Ovary (tissue), 10 donors: ENCODE measurements at regions of chr3 and their contacts with region 1.

Region 1: GRCh38 chr3:179451265-179452175 is at the start of gene GNB4:
- DNase-seq: peak; percentile 60 to 83 (median 73)
- H3K4me3 ChIP-seq: peak within 1 kb of the TSS; percentile 58
- H3K27ac ChIP-seq: peak within 1 kb of the TSS; percentile 74 to 90
- H3K4me1 ChIP-seq: peaks cover 3% of the 10 kb centered on the region
- H3K27me3 ChIP-seq: no peaks in the 10 kb centered on the region
- CTCF ChIP-seq: no peak
- EP300 ChIP-seq: no peak
- POLR2A ChIP-seq: peak; percentile 16
- total RNA-seq, gene GNB4: 6.2 to 19.1 (median 11.6) TPM

Region 2: GRCh38 chr3:178743297-178743696 is 708.2 kb before region 1 on chr3:
- intact Hi-C with region 1: no loop called
- DNase-seq: no peak
- H3K4me3 ChIP-seq: no peak overlapping the region
- H3K27ac ChIP-seq: no peak overlapping the region
- H3K4me1 ChIP-seq: no peaks in the 10 kb centered on the region
- H3K27me3 ChIP-seq: no peaks in the 10 kb centered on the region
- CTCF ChIP-seq: no peak
- EP300 ChIP-seq: no peak
- POLR2A ChIP-seq: no peak

Region 3: DNA sequence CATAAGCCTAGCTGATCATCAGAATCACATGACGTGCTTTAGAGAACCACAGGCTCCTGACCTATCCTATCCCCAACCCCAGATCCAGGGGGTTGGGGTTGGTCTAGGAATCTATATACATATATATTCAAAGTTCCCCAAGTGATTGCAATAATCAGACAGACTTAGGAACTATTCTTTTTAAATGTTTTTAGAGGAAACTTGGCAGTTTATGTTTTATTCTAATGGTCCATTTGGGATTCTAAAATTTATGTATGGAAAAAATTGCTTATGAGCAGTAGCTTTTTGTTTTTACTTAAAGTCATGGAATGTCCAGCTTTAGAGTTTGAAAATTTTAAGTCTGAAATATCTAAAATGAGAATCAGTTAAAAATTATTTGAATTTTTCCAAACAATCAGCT is 81.9 kb before region 1 on chr3:
- intact Hi-C with region 1: no loop called
- DNase-seq: no peak
- H3K4me3 ChIP-seq: no peak overlapping the region
- H3K27ac ChIP-seq: no peak overlapping the region
- H3K4me1 ChIP-seq: no peaks in the 10 kb centered on the region
- H3K27me3 ChIP-seq: no peaks in the 10 kb centered on the region
- CTCF ChIP-seq: no peak
- EP300 ChIP-seq: no peak
- POLR2A ChIP-seq: no peak

Region 4: DNA sequence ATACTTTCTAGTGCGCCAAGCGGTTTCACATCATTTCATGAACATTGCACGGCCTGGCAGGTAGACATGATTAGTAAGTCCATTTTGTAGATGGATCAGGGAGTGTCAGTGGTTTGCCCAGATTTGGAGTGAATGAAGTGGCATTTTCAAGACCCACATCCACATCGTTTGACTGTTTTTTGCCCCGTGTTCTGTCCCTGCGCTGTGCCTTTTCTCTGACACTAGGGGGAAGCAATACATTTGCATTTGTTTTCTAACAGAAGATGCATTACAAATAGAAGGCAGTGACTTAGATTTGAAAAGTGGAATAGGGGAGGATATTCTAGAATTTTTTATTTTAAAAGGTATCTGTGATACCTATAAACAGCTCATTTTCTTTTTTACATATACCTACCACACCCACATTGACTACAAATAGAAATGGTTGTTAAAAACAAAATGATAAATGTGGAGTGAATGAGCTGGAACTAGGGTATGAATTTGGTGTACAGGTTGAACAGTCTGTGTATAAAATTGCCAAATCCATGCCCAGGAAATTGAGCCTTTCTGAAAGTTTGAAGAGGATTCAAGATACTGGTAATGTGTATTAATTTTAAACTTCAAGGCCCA is 299.3 kb after region 1 on chr3:
- intact Hi-C with region 1: loop called in 1 of 4 experiments (anchors 10 kb)
- DNase-seq: no peak
- H3K4me3 ChIP-seq: no peak overlapping the region
- H3K27ac ChIP-seq: no peak overlapping the region
- H3K4me1 ChIP-seq: no peaks in the 10 kb centered on the region
- H3K27me3 ChIP-seq: no peaks in the 10 kb centered on the region
- CTCF ChIP-seq: no peak
- EP300 ChIP-seq: no peak
- POLR2A ChIP-seq: no peak

Region 5: DNA sequence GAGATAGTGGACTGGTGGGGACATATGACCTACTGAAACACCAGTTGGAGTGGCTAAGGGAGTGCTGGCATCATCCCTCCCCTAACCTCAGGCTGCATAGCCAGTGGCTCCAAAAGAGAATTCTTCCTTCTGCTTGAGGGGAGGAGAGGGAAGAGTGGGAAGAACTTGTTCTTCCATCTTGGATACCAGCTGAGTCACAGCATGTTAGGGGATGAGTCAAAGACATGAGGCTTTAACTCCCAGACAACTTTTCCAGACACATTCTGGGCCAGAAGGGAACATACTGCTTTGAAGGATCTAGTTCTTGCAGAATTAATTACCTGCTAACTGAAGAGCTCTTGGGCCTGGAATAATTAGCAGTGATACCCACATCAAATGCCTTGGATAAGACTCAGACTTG is 622.0 kb after region 1 on chr3:
- intact Hi-C with region 1: no loop called
- DNase-seq: no peak
- H3K4me3 ChIP-seq: no peak overlapping the region
- H3K27ac ChIP-seq: no peak overlapping the region
- H3K4me1 ChIP-seq: no peaks in the 10 kb centered on the region
- H3K27me3 ChIP-seq: no peaks in the 10 kb centered on the region
- CTCF ChIP-seq: no peak
- EP300 ChIP-seq: no peak
- POLR2A ChIP-seq: no peak